HCT116 (cell line): ENCODE measurements at regions of chrX and their contacts with region 1.

Region 1: GRCh38 chrX:56309881-56310280 is 77.7 kb downstream of the KLF8 start:
- DNase-seq: no peak
- ATAC-seq: no peak
- H3K4me3 ChIP-seq: no peak overlapping the region
- H3K27ac ChIP-seq: no peak overlapping the region
- H3K4me1 ChIP-seq: no peaks in the 10 kb centered on the region
- H3K27me3 ChIP-seq: no peaks in the 10 kb centered on the region
- CTCF ChIP-seq: no peak
- POLR2A ChIP-seq: no peak
- RAD21 ChIP-seq: no peak

Region 2: GRCh38 chrX:56366901-56367300 is 57.0 kb after region 1 on chrX:
- CTCF ChIA-PET with region 1: no interaction called
- POLR2A ChIA-PET with region 1: no interaction called
- RAD21 ChIA-PET with region 1: no interaction called
- intact Hi-C with region 1: loop called (anchors 10 kb)
- DNase-seq: no peak
- ATAC-seq: no peak
- H3K4me3 ChIP-seq: no peak overlapping the region
- H3K27ac ChIP-seq: no peak overlapping the region
- H3K4me1 ChIP-seq: no peaks in the 10 kb centered on the region
- H3K27me3 ChIP-seq: no peaks in the 10 kb centered on the region
- CTCF ChIP-seq: no peak
- POLR2A ChIP-seq: no peak
- RAD21 ChIP-seq: no peak

Region 3: DNA sequence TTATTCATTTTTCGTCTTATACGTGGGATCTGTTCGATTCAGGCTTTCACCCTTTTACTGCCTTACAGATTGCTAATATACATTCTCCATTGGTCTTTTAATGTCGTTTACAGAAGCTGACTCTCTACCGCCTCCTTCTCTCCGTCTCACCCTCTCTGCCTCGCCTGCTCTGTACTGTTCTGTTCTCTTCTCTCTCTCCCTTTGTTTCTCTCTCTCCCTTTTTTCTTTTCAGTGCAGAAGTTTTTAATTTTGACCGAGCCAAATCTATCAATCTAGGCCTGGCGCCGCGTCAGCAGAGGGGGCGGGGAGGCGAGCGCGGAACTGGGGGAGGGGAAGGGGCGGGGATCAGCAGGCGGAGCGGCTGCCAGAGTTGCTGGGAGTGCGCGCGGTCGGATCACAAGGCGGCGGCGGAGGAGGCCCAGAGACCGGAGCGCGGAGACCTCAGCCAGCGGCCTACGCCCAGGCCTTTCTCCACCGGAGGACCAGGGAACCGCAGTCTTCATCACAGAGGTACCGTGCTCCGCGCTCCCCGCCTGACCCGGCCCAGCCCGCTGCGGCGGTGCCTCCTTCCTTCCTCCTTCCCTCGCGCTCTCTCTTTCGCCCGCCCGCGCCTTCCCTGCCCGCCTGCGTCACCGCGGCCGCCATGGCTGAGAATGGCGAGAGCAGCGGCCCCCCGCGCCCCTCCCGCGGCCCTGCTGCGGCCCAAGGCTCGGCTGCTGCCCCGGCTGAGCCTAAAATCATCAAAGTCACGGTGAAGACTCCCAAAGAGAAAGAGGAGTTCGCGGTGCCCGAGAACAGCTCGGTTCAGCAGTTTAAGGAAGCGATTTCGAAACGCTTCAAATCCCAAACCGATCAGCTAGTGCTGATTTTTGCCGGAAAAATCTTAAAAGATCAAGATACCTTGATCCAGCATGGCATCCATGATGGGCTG is 253.6 kb after region 1 on chrX and contains the start of gene UBQLN2:
- CTCF ChIA-PET with region 1: no interaction called
- POLR2A ChIA-PET with region 1: no interaction called
- RAD21 ChIA-PET with region 1: no interaction called
- intact Hi-C with region 1: no loop called
- DNase-seq: peak; percentile 31
- ATAC-seq: peak; percentile 92
- H3K4me3 ChIP-seq: peak within 1 kb of the TSS; percentile 62 to 77
- H3K27ac ChIP-seq: peak within 1 kb of the TSS; percentile 87
- H3K4me1 ChIP-seq: peaks cover 3 to 5% of the 10 kb centered on the region in 2 experiments
- H3K27me3 ChIP-seq: no peaks in the 10 kb centered on the region
- CTCF ChIP-seq: no peak; a peak in 1 of 6 replicates
- POLR2A ChIP-seq: no peak
- RAD21 ChIP-seq: no peak; the same call in 1 of the 2 replicates
- total RNA-seq, gene UBQLN2: 20.9 TPM